ENCODE measurements at regions of chr5 and their contacts with region 1.

Region 1: DNA sequence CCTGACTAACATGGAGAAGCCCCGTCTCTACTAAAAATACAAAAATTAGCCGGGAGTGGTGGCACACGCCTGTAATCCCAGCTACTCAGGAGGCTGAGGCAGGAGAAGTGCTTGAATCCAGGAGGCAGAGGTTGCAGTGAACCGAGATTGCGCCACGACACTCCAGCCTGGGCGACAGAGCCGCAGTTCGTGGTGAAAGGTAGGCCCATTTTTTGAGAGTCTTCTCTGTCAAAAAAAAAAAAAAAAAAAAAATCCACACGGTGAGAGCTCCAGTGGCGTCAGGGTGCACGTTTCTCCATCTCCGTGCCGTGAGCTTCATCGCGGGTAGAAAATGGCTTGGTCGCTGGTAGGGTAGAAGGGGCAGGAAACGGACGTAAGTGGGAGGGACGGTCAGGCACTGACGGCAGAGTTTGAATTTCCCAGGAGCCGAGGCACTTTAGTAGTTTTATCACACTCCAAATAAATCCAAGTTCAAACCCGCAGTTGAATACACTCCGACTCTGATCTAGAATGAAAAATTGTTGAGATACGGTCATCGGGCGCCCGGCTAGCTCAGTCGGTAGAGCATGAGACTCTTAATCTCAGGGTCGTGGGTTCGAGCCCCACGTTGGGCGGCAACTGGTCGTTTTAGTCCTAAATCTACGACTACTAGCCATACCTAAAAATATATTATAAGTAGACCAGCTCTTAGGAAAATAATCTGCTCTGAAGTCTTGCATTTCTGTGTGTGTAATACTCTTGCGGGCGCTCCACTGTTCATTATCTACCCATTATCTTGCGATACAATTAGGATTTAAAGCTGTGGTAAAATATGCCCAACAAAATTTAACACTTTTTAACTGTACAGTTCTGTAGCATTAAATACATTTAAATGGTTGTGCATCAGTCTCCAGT is 2.5 kb upstream of the TRIM7 start:
- DNase-seq: peak; percentile 60 to 96
- ATAC-seq: peak; percentile 51 to 66
- H3K4me3 ChIP-seq: peak overlapping the region; percentile 54
- H3K27ac ChIP-seq: peak overlapping the region; percentile 69 to 93
- H3K4me1 ChIP-seq: peaks cover 15% of the 10 kb centered on the region
- CTCF ChIP-seq: no peak
- EP300 ChIP-seq: no peak
- POLR2A ChIP-seq: peak; percentile 28
- RAD21 ChIP-seq: no peak

Region 2: DNA sequence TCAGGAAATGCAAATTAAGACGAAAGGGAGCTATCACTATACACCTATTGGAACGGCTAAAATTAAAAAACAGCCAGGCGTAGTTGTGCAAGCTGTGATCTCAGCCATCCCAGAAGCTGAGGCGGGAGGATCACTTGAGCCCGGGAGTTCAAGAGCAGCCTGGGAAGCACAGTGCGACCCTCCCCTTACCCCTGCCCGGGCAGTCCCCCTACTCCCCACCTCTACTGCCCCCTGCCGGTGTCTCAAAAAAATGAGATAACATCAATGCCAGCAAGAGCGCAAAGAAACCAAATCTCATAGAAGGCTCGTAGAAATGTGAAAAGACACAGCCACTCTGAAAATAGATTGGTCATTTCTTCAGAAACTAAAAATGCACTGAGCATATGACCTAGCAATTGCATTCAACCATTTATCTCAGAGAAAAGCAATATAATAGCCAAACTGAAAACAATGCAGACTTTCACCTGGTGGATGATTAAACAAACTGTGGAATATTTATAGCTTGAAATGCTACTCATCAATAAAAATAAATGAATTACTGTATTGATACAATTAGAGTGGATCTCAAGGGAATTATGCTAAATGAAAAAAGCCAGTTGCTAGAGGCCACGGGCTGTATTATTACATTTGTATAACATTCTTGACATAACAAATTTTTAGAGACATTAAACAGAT is 39.5 kb before region 1 on chr5:
- CTCF ChIA-PET with region 1: interaction called, 17 read pairs
- POLR2A ChIA-PET with region 1: interaction called, 12 read pairs
- DNase-seq: peak in 1 of 2 experiments; percentile 70
- ATAC-seq: no peak
- H3K4me3 ChIP-seq: peak overlapping the region; percentile 13; the same call in 1 of the 3 replicates
- H3K27ac ChIP-seq: 0 out of 6 replicates have a peak overlapping the region, but pooled peaks of 1 of the 2 experiments have one; percentile 33
- H3K4me1 ChIP-seq: peaks cover 29% of the 10 kb centered on the region
- CTCF ChIP-seq: peak; percentile 73
- EP300 ChIP-seq: no peak
- POLR2A ChIP-seq: no peak
- RAD21 ChIP-seq: peak; percentile 43 to 46; a peak in 4 of 5 replicates

Region 3: DNA sequence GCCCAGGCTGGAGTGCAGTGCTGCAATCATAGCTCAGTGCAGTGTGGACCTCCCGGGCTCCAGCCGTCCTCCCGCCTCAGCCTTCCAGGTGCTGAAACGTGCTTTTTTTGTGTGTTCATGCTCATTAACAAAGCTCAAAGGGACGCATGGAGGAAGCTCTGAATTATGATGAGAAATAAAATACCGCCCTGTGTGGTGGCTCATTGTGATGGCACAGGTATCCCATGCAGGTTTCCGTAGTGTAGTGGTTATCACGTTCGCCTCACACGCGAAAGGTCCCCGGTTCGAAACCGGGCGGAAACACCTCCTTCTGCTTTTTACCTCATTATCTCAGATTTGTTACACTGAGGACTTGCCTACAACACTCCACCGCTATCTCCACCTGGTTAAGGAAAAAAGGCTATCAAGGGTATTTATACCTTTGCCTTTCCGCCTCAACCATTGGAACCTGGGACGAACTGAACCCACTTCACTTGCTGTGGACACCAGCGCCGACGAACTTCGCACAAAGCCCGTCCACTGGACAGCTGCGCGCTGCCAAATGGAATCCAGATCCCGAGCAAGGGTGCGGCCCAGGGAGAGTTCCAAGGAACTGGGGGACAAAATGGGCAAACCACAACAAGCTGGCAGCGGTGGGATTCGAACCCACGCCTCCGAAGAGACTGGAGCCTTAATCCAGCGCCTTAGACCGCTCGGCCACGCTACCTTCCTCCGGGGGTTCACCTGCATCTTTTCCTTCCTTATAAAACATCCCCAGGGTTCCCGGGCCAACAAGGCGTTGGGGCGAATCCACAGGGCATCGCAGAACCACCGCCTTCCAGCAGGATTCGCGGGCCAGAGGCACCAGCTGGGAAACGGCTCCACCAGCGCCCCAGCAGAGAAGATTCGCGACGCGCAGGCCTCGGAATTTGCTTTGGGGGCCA is 33.8 kb before region 1 on chr5:
- CTCF ChIA-PET with region 1: interaction called, 17 read pairs
- POLR2A ChIA-PET with region 1: interaction called, 12 read pairs
- DNase-seq: peak; percentile 84 to 99
- ATAC-seq: peak; percentile 84 to 87
- H3K4me3 ChIP-seq: peak overlapping the region; percentile 50
- H3K27ac ChIP-seq: peak overlapping the region; percentile 76 to 87
- H3K4me1 ChIP-seq: peaks cover 21% of the 10 kb centered on the region
- CTCF ChIP-seq: peak; percentile 5; the same call in 1 of the 3 replicates
- EP300 ChIP-seq: no peak
- POLR2A ChIP-seq: no peak
- RAD21 ChIP-seq: 0 out of 5 replicates have a peak, but pooled peaks of 1 of the 2 experiments have one; percentile 1

Region 4: DNA sequence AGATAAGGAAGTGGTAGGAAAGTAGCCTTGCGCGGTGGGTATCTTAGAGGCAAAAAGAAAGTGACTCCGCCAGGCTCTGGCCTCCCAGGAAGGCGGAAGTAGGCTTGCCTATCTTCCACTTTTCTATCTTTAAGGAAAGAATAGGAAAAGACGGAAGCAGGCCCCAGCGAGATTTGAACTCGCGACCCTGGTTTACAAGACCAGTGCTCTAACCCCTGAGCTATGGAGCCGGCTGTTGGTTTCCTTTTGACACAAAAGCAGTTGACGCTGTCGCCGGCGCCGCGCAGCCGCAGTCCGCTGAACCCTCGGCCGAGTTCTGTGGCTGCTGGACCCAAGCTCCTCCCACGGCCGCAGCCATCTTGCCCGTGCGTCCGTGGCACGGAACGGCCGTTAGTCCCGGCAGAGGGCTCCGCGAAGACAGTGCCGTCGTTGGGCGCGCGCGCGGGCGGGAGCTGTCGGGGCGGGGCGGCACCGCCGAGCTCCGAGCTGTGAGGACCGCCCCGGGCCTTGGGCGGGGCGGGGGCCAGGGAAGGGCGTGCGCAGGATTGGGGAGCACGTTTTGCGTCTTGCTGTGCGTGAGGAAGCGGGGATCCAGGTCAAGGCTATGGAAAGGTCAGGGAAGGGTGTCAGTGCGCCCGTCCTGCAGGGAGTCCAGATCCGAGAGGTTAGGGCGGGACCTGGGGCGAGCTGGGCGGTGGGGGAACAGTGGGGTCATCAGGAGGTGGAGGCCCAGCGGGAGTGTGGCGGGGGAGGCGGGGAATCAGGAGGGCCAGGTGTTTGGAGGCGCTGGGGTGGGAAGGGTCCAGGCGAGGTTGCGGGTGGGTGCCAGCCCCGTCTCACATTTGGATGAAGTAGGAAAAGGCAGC is 15.7 kb before region 1 on chr5:
- CTCF ChIA-PET with region 1: interaction called, 36 read pairs
- POLR2A ChIA-PET with region 1: interaction called, 159 read pairs
- DNase-seq: peak; percentile 65 to 96
- ATAC-seq: peak; percentile 48 to 69
- H3K4me3 ChIP-seq: peak overlapping the region; percentile 82
- H3K27ac ChIP-seq: peak overlapping the region; percentile 96
- H3K4me1 ChIP-seq: peaks cover 12% of the 10 kb centered on the region
- CTCF ChIP-seq: no peak
- EP300 ChIP-seq: no peak
- POLR2A ChIP-seq: peak; percentile 71
- RAD21 ChIP-seq: 0 out of 5 replicates have a peak, but pooled peaks of 1 of the 2 experiments have one; percentile 29

Region 5: GRCh38 chr5:181223058-181223728 is 15.7 kb after region 1 on chr5 and contains the start of gene TRIM41:
- CTCF ChIA-PET with region 1: interaction called, 5 read pairs
- POLR2A ChIA-PET with region 1: interaction called, 30 read pairs
- DNase-seq: peak; percentile 93 to 99
- ATAC-seq: peak; percentile 72 to 78
- H3K4me3 ChIP-seq: peak within 1 kb of the TSS; percentile 90
- H3K27ac ChIP-seq: peak within 1 kb of the TSS; percentile 95 to 98
- H3K4me1 ChIP-seq: peaks cover 16% of the 10 kb centered on the region
- CTCF ChIP-seq: no peak
- EP300 ChIP-seq: no peak
- POLR2A ChIP-seq: peak; percentile 60
- RAD21 ChIP-seq: 0 out of 5 replicates have a peak, but pooled peaks of 1 of the 2 experiments have one; percentile 15
- polyA plus RNA-seq, gene TRIM41: 17.0 and 22.7 TPM in 2 replicates

Region 6: GRCh38 chr5:181259971-181260370 is 52.5 kb after region 1 on chr5:
- CTCF ChIA-PET with region 1: no interaction called
- POLR2A ChIA-PET with region 1: no interaction called
- DNase-seq: no peak
- ATAC-seq: no peak
- H3K4me3 ChIP-seq: peak overlapping the region; percentile 94
- H3K27ac ChIP-seq: peak overlapping the region; percentile 98 to 99
- H3K4me1 ChIP-seq: peaks cover 22% of the 10 kb centered on the region
- CTCF ChIP-seq: no peak
- EP300 ChIP-seq: no peak
- POLR2A ChIP-seq: no peak
- RAD21 ChIP-seq: no peak

Region 7: DNA sequence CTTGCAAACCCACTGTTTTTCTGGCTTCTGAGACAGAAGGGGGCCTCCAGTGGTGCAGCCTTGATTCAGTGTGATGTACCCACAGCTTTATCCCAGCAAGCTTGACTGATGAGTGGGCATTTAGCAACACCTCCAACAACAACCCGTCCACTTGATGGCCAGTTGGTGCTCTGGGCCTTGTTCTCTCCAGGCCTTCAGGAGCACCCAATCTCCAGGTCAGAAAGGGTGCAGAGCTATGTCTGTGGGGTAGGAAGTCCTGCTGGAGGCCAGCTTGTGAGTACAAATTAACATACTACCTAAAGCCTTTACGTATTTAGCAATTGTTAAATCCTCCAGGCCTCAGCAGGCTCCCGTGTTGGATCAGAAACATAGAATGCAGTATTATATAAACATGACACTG is 63.6 kb after region 1 on chr5:
- CTCF ChIA-PET with region 1: no interaction called
- POLR2A ChIA-PET with region 1: no interaction called
- DNase-seq: no peak
- ATAC-seq: no peak
- H3K4me3 ChIP-seq: no peak overlapping the region
- H3K27ac ChIP-seq: no peak overlapping the region
- H3K4me1 ChIP-seq: no peaks in the 10 kb centered on the region
- CTCF ChIP-seq: no peak
- EP300 ChIP-seq: no peak
- POLR2A ChIP-seq: no peak
- RAD21 ChIP-seq: no peak